ENCODE measurements at regions of chr4 and their contacts with region 1.

Region 1: GRCh38 chr4:173420324-173420752 is 21.4 kb upstream of the SCRG1 start:
- DNase-seq: no peak
- H3K4me3 ChIP-seq: no peak overlapping the region
- H3K4me3 Mint-ChIP-seq: no peak overlapping the region
- H3K27ac Mint-ChIP-seq: no peak overlapping the region
- H3K4me1 ChIP-seq: no peaks in the 10 kb centered on the region
- H3K4me1 Mint-ChIP-seq: peaks cover 5% of the 10 kb centered on the region
- H3K27me3 ChIP-seq: no peaks in the 10 kb centered on the region
- H3K27me3 Mint-ChIP-seq: no peaks in the 10 kb centered on the region
- CTCF ChIP-seq: peak; percentile 33 to 38

Region 2: GRCh38 chr4:173318648-173319211 is 101.6 kb before region 1 on chr4:
- CTCF ChIA-PET with region 1: interaction called, 3 read pairs
- POLR2A ChIA-PET with region 1: no interaction called
- intact Hi-C with region 1: loop called (anchors 1 kb)
- DNase-seq: no peak
- H3K4me3 ChIP-seq: no peak overlapping the region
- H3K4me3 Mint-ChIP-seq: no peak overlapping the region
- H3K27ac Mint-ChIP-seq: no peak overlapping the region
- H3K4me1 ChIP-seq: no peaks in the 10 kb centered on the region
- H3K4me1 Mint-ChIP-seq: peaks cover 7% of the 10 kb centered on the region
- H3K27me3 ChIP-seq: no peaks in the 10 kb centered on the region
- H3K27me3 Mint-ChIP-seq: no peaks in the 10 kb centered on the region
- CTCF ChIP-seq: peak; percentile 12 to 39

Region 3: GRCh38 chr4:173370477-173371291 is 49.7 kb before region 1 on chr4 and contains the start of gene SAP30:
- CTCF ChIA-PET with region 1: interaction called, 9 read pairs
- POLR2A ChIA-PET with region 1: interaction called, 8 read pairs
- intact Hi-C with region 1: loop called (anchors 2 kb)
- DNase-seq: peak; percentile 93 to 96
- H3K4me3 ChIP-seq: peak within 1 kb of the TSS; percentile 93
- H3K4me3 Mint-ChIP-seq: peak within 1 kb of the TSS; percentile 85
- H3K27ac Mint-ChIP-seq: peak within 1 kb of the TSS; percentile 83
- H3K4me1 ChIP-seq: 0 out of 2 replicates have a peak, but pooled peaks cover 3% of the 10 kb centered on the region
- H3K4me1 Mint-ChIP-seq: peaks cover 6% of the 10 kb centered on the region
- H3K27me3 ChIP-seq: no peaks in the 10 kb centered on the region
- H3K27me3 Mint-ChIP-seq: peaks cover 2% of the 10 kb centered on the region
- CTCF ChIP-seq: no peak
- total RNA-seq, gene SAP30: 9.4 and 9.8 TPM in 2 replicates

Region 4: DNA sequence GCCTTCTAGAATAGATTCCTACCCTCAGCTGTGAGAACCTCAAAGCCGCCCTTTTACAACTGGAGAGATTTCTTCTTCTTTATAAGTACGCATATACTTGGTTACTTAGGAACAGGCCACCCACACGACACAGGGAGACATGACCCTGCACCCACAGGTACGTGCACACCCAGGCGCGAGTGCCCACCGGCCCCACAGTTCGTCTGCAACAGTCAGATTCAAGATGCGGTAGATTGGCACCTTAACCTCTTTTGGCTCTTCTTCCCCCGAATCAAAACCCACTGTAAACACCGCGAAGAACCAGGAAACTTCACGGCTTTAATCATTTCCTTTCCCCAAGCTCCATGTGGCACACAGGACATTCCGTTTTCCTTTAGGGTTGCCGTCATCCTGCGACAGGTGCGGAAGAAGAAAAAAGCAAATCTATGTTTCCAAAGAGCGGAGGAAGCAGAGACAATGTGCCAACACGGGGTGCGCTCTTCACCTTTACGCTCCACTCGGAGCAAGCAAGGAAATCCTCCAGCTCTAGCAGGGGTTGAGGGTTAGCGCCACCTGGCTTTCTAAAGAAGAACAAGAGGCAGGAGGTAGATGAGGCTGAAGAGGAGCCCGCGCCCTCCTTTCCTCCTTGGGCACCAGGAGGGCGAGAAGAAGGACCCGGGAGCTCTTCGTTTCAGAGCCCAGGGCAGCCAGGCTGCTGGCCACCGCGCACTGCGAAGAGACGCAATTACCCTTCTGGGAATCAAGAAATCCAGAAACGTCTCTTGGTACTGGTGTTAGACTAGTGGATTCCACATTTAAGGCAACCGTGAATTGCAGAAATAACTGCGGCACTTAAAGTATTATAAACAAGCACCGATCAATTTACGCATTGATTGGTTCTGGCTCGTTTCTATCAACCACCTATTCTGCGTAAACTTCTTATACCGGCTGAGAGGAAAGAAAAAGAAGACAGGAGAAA is 74.0 kb after region 1 on chr4:
- CTCF ChIA-PET with region 1: interaction called, 39 read pairs
- POLR2A ChIA-PET with region 1: no interaction called
- intact Hi-C with region 1: loop called (anchors 1 kb)
- DNase-seq: peak; percentile 68
- H3K4me3 ChIP-seq: peak overlapping the region; percentile 33
- H3K4me3 Mint-ChIP-seq: peak overlapping the region; percentile 69
- H3K27ac Mint-ChIP-seq: no peak overlapping the region
- H3K4me1 ChIP-seq: peaks cover 9% of the 10 kb centered on the region; the same call in 1 of the 2 replicates
- H3K4me1 Mint-ChIP-seq: peaks cover 8% of the 10 kb centered on the region
- H3K27me3 ChIP-seq: no peaks in the 10 kb centered on the region; the same call in 1 of the 2 replicates
- H3K27me3 Mint-ChIP-seq: no peaks in the 10 kb centered on the region
- CTCF ChIP-seq: peak; percentile 65 to 89

Region 5: DNA sequence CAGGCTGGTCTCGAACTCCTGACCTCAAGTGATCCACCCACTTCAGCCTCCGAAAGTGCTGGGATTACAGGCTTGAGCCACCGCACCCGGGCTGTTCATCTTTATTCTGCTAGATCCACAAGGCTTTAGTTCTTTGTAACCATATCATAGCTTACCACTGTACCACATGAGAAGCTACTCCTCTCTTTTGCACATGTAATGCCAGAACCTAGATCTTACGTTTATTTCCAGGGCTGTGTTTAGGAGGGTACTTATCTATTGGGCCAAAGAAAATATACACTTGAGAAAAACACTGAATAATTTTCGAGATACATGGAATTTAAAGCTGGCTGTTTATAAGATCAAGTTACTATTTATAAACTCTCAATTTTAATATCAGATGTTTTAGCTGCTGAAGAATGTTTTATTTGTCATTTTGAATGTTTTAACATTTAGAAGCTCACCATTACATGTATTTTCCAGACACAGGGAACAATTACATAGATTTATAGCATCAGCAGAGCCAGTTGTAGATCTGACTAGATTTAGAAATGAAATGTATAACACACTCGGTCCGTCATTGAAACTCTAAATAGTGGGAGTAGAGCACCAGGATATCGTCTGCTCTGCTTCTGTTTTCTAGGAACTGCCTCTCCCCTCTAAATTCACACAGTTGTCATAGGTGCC is 265.0 kb after region 1 on chr4:
- CTCF ChIA-PET with region 1: no interaction called
- POLR2A ChIA-PET with region 1: no interaction called
- intact Hi-C with region 1: no loop called
- DNase-seq: no peak
- H3K4me3 ChIP-seq: no peak overlapping the region
- H3K4me3 Mint-ChIP-seq: no peak overlapping the region
- H3K27ac Mint-ChIP-seq: no peak overlapping the region
- H3K4me1 ChIP-seq: no peaks in the 10 kb centered on the region
- H3K4me1 Mint-ChIP-seq: no peaks in the 10 kb centered on the region
- H3K27me3 ChIP-seq: no peaks in the 10 kb centered on the region
- H3K27me3 Mint-ChIP-seq: peaks cover 9% of the 10 kb centered on the region
- CTCF ChIP-seq: no peak